ENCODE measurements at regions of chr6 and their contacts with region 1.

Region 1: DNA sequence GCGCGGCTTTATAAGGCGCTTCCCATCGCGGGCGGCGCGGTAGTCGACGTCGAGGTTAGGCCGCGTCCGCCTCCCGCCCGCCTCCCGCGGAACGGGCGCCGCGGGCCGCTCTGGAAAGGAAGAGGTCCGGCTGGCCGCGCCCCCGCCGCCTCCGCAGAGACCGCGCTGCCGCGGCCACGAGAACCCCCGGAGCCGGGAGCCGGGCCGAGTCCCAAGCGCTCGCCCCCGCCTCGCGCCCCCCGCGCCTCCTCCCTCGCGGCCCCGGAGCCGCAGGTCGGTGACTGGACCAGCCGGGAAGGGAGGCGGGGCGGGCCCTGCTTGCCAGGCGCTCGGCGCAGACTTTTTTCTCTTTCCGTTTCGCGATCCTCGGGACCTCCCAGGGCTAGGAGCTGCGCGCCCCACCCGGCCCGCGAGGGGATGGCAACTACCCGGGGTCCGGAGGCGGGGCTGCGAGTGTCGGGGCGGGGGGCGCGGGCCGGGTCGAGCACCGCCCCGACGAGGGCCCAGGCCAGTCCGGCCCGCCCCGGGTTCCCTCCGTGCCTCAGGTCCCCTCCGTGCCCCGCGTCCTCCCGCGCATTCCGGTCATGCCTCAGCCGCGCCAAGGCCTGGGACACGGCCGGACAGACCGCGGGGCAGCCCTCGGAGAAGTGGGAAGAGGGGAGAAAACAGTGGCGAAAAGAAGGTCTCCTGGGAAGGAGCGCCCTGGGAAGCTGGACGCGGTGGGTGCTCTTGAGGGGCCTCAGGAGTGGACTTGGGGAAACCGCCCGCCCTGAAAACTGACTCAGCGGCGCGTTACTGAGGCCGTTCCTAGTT is 423 bp upstream of the PXDC1 start:
- DNase-seq: peak; percentile 96
- H3K4me3 ChIP-seq: peak overlapping the region; percentile 58 to 98 (median 70)
- H3K27ac ChIP-seq: peak overlapping the region; percentile 92 to 100 (median 97)
- H3K4me1 ChIP-seq: peaks cover 0 to 53% (median 40%) of the 10 kb centered on the region in 4 donors
- H3K27me3 ChIP-seq: no peaks in the 10 kb centered on the region
- CTCF ChIP-seq: peak in 2 of 4 experiments; percentile 35 to 37
- EP300 ChIP-seq: peak in 2 of 4 donors; percentile 4 to 11
- POLR2A ChIP-seq: peak in 1 of 2 donors; percentile 18

Region 2: DNA sequence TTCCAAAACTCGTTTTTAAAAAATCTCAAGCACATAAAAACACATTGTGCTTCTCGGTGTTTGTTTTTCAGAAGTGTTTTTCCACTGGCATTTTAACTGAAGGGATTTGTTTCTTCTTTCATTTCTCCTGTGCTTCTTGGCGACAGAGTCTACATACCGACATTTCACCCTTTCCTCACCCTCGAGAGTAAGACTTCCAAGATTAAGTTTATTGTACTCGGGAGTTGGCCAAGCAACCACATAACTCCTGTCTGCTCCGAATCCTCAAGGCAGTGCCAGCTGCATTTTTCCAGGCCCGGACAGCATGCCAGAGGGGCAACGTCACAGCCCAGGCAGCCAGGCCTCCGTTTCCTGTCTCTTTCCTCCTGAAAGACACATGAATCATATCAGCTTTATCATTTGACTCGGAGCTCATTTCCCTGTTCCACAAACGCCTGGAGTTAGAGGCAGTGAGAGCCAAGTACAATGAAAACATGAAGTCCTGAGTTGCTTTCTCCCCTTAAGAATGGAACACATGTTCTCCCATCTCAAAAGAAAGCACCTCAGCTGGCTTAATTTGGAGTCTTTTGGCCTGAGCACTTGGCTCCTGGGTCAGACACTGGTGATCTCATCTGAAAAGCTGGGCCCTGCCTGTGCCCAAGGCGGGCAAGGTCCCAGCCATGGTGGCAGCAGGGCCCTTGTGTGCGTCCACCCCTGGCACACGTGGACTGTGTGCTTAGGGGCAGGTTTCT is 74.1 kb after region 1 on chr6:
- intact Hi-C with region 1: loop called (anchors 2 kb)
- DNase-seq: peak; percentile 96
- H3K4me3 ChIP-seq: peak overlapping the region in 3 of 4 donors; percentile 12 to 35 (median 25)
- H3K27ac ChIP-seq: peak overlapping the region; percentile 89 to 95 (median 92)
- H3K4me1 ChIP-seq: peaks cover 0 to 39% (median 21%) of the 10 kb centered on the region in 4 donors
- H3K27me3 ChIP-seq: no peaks in the 10 kb centered on the region
- CTCF ChIP-seq: no peak
- EP300 ChIP-seq: peak in 3 of 4 donors; percentile 70 to 84 (median 79)
- POLR2A ChIP-seq: no peak

Region 3: DNA sequence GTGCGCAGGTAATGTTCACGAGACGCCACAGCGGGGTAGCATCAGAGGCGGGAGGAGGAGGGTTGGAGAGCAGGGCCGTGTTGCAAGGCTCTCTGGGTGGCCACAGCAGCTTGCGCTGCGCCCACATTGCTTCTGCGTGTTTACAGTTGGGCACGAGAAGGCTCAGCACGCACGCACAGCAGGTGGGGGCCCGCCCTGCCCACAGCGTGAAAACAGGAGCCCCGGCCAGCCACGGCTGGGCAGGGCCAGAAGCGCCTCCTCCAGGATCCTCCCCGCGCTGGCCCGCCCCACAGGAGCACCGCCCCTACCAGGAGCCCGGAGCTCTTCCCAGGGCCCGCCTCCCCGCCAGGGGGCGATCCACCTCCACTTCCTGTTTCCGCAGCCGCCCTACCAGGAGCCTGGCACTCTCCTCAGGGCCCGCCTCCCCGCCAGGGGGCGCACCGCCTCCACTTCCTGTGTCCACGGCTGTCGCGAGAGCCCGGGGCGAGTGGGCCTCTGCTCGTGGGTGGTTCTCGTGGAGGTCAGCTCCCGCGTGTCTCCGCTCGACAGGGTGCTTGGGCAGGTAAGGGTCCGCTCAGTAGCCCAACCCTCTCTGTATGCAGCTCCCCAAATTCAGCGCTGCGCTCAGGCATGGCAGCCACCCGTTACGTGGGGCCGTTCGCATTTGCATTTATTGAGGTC is 97.1 kb after region 1 on chr6 and contains the start of gene FAM50B:
- intact Hi-C with region 1: loop called (anchors 2 kb)
- DNase-seq: peak; percentile 96
- H3K4me3 ChIP-seq: peak within 1 kb of the TSS; percentile 39 to 55 (median 49)
- H3K27ac ChIP-seq: peak within 1 kb of the TSS; percentile 67 to 80 (median 73)
- H3K4me1 ChIP-seq: peaks cover 0 to 25% (median 8%) of the 10 kb centered on the region in 4 donors
- H3K27me3 ChIP-seq: no peaks in the 10 kb centered on the region
- CTCF ChIP-seq: peak; percentile 83 to 99 (median 96)
- EP300 ChIP-seq: no peak
- POLR2A ChIP-seq: no peak
- total RNA-seq, gene FAM50B: 9.6 to 16.1 (median 13.3) TPM

Region 4: DNA sequence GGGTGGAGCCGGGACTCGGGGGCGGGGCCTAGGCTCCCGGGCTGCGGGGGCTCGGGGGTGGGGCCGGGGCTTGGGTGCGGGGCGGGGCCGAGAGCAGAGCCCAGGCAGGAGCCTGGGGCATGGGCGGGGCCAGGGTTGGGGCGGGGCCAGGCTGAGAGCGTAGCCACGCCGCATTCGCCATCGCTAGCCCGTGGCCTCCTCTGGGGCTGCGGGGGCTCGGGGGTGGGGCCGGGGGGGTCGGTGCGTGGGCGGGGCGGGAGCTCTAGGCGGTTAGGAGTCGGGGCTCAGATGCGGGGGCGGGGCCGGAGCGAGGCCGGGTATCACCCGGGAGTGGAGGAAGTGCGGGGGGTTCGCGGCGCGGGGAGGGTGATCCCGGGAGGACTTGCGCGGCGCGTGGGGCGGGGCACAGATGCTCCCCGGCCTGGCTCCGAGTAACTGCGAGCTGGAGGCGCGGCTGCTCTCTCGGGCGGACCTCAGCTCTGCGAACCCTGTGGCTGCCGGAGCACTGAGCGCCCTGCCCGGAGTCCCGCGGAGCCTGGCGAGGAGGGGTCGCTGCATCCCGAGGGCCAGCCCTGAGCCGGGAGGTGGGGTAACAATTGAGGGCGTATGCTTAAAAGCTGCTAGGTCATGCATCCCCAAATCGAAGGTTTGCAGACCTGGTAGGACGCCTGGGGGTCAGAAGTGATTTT is 383.9 kb after region 1 on chr6:
- intact Hi-C with region 1: loop called (anchors 10 kb)
- DNase-seq: peak; percentile 100
- H3K4me3 ChIP-seq: peak overlapping the region; percentile 66 to 93 (median 80)
- H3K27ac ChIP-seq: peak overlapping the region; percentile 90 to 97 (median 93)
- H3K4me1 ChIP-seq: peaks cover 0 to 24% (median 21%) of the 10 kb centered on the region in 4 donors
- H3K27me3 ChIP-seq: no peaks in the 10 kb centered on the region
- CTCF ChIP-seq: peak in 1 of 4 experiments; percentile 9
- EP300 ChIP-seq: no peak
- POLR2A ChIP-seq: peak in 1 of 2 donors; percentile 22